ENCODE measurements at regions of chrX and their contacts with region 1.

Region 1: GRCh38 chrX:78945186-78945912 is at the start of gene P2RY10:
- DNase-seq: peak; percentile 85
- ATAC-seq: peak; percentile 79
- H3K4me3 ChIP-seq: peak within 1 kb of the TSS; percentile 86
- H3K27ac ChIP-seq: peak within 1 kb of the TSS; percentile 84
- H3K4me1 ChIP-seq: peaks cover 10% of the 10 kb centered on the region
- H3K27me3 ChIP-seq: no peaks in the 10 kb centered on the region
- CTCF ChIP-seq: no peak
- EP300 ChIP-seq: peak; percentile 88 to 90
- POLR2A ChIP-seq: peak; percentile 67
- RAD21 ChIP-seq: no peak
- polyA plus RNA-seq, gene P2RY10: 43.8 to 71.9 TPM

Region 2: GRCh38 chrX:78555401-78555980 is 389.9 kb before region 1 on chrX:
- CTCF ChIA-PET with region 1: interaction called, 5 read pairs
- POLR2A ChIA-PET with region 1: no interaction called
- RAD21 ChIA-PET with region 1: interaction called, 9 read pairs
- SMC1A ChIA-PET with region 1: interaction called, 3 read pairs
- in situ Hi-C with region 1: loop called (anchors 5 kb)
- intact Hi-C with region 1: loop called (anchors 5 kb)
- DNase-seq: no peak
- ATAC-seq: peak; percentile 48; the same call in 2 of the 3 replicates
- H3K4me3 ChIP-seq: no peak overlapping the region
- H3K27ac ChIP-seq: no peak overlapping the region
- H3K4me1 ChIP-seq: no peaks in the 10 kb centered on the region
- H3K27me3 ChIP-seq: no peaks in the 10 kb centered on the region
- CTCF ChIP-seq: peak; percentile 28 to 58 (median 49); a peak in 4 of 6 replicates
- EP300 ChIP-seq: no peak
- POLR2A ChIP-seq: no peak
- RAD21 ChIP-seq: peak; percentile 79

Region 3: DNA sequence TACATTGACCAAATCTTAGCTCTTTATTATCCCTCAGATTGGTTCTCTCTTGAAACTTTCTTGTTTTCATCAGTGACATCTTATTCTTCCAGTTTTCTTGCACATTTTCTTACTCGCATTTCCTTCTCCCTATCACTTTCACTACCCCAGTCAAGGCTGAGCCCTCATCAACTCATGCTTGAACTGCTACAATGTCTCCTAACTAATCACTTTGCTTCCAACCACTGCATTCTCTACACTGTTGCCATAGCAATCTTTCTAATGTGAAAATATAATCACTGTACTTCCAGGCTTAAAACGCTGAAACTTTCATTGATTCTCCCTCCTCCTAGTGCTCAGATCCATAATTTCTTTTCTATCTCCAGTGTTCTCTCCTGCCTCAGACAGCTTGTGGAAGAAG is 220.1 kb before region 1 on chrX:
- CTCF ChIA-PET with region 1: no interaction called
- POLR2A ChIA-PET with region 1: no interaction called
- RAD21 ChIA-PET with region 1: no interaction called
- SMC1A ChIA-PET with region 1: no interaction called
- in situ Hi-C with region 1: no loop called
- intact Hi-C with region 1: no loop called
- DNase-seq: no peak
- ATAC-seq: no peak
- H3K4me3 ChIP-seq: no peak overlapping the region
- H3K27ac ChIP-seq: no peak overlapping the region
- H3K4me1 ChIP-seq: no peaks in the 10 kb centered on the region
- H3K27me3 ChIP-seq: no peaks in the 10 kb centered on the region
- CTCF ChIP-seq: no peak
- EP300 ChIP-seq: no peak
- POLR2A ChIP-seq: no peak
- RAD21 ChIP-seq: no peak

Region 4: GRCh38 chrX:78886550-78886949 is 58.8 kb before region 1 on chrX:
- CTCF ChIA-PET with region 1: no interaction called
- POLR2A ChIA-PET with region 1: no interaction called
- RAD21 ChIA-PET with region 1: no interaction called
- SMC1A ChIA-PET with region 1: interaction called, 10 read pairs
- in situ Hi-C with region 1: no loop called
- intact Hi-C with region 1: no loop called
- DNase-seq: peak; percentile 5
- ATAC-seq: peak; percentile 85
- H3K4me3 ChIP-seq: no peak overlapping the region
- H3K27ac ChIP-seq: no peak overlapping the region
- H3K4me1 ChIP-seq: no peaks in the 10 kb centered on the region
- H3K27me3 ChIP-seq: no peaks in the 10 kb centered on the region
- CTCF ChIP-seq: peak; percentile 28 to 47 (median 38); a peak in 3 of 6 replicates
- EP300 ChIP-seq: no peak
- POLR2A ChIP-seq: no peak
- RAD21 ChIP-seq: no peak

Region 5: DNA sequence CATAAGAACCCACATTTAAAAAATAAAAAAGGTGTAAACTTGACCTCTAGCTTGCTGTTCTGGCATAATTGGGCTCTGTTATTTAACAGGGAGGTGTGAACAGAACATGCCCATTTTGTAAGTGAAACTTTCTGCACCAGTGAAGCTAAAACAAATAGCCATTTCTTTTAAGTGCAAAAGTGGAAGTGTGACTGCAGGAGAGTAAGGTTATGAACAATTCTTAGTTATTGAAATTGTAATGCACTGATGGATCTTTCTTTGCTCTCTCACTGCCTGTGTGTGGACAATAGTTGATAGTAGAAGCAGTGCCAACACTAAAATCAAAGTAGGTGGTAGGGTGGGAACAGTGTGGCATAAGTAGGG is 12.4 kb after region 1 on chrX:
- CTCF ChIA-PET with region 1: interaction called, 10 read pairs
- POLR2A ChIA-PET with region 1: interaction called, 14 read pairs
- RAD21 ChIA-PET with region 1: interaction called, 33 read pairs
- SMC1A ChIA-PET with region 1: interaction called, 81 read pairs
- in situ Hi-C with region 1: no loop called
- intact Hi-C with region 1: loop called (anchors 1 kb)
- DNase-seq: peak; percentile 93
- ATAC-seq: peak; percentile 84
- H3K4me3 ChIP-seq: peak overlapping the region; percentile 49; the same call in 1 of the 2 replicates
- H3K27ac ChIP-seq: peak overlapping the region; percentile 86
- H3K4me1 ChIP-seq: peaks cover 28% of the 10 kb centered on the region
- H3K27me3 ChIP-seq: no peaks in the 10 kb centered on the region
- CTCF ChIP-seq: no peak
- EP300 ChIP-seq: peak; percentile 72 to 97; a peak in 3 of 4 replicates
- POLR2A ChIP-seq: no peak
- RAD21 ChIP-seq: no peak

Region 6: DNA sequence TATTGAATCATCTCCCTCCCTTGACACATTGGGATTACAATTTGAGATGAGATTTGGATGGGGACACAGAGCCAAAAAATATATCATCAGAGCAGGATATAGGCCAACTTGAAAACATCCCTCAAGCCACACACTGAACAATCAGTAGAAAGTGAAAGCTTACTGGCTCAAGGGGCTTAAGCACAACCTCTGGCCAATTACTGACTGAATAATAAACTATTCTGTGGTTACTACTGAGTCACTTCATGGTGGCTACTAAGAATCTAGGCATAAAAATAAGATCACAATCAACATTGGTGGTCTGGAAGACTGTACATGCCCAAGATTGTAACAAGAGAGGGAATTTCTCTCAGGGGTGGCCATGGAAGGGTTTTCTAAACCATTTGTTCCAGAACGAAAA is 171.7 kb after region 1 on chrX:
- CTCF ChIA-PET with region 1: no interaction called
- POLR2A ChIA-PET with region 1: no interaction called
- RAD21 ChIA-PET with region 1: no interaction called
- SMC1A ChIA-PET with region 1: no interaction called
- in situ Hi-C with region 1: no loop called
- intact Hi-C with region 1: no loop called
- DNase-seq: no peak
- ATAC-seq: peak; percentile 98
- H3K4me3 ChIP-seq: no peak overlapping the region
- H3K27ac ChIP-seq: no peak overlapping the region
- H3K4me1 ChIP-seq: no peaks in the 10 kb centered on the region
- H3K27me3 ChIP-seq: no peaks in the 10 kb centered on the region
- CTCF ChIP-seq: no peak
- EP300 ChIP-seq: no peak
- POLR2A ChIP-seq: no peak
- RAD21 ChIP-seq: no peak

Region 7: DNA sequence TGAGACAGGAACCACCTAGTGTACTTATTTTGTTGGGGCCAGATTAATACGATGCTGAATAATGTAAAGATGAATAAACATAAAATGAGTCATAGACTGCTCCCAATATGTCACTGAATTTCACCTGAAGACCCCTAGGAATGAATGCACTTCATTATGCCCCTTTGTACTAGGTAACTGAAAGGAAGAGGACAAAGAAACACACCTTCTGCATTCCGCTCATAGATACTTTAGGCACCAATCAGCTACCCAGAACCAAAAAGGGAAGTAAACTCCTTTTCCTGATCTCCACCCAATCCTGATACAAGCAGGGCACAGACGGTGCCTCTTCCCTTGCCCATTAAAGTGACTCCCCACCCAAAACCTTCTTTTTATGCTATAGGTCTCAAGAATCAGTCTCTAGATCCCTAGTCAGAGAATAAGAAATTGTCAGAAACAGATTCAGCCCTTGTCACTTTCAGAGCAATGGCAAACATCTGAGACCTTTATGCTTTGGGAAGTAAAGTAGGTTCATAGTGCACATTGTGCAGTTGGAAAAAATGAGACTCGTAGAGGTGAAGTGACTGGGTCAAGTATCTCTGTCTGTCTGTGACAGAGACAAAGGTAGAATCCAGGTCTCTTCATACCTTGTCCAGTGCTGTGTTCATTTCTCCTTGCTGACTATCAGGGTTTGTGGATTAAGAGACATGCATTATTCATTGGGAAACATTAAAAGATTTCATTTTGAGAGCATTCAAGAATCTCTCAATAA is 201.5 kb after region 1 on chrX:
- CTCF ChIA-PET with region 1: interaction called, 4 read pairs
- POLR2A ChIA-PET with region 1: no interaction called
- RAD21 ChIA-PET with region 1: interaction called, 11 read pairs
- SMC1A ChIA-PET with region 1: interaction called, 8 read pairs
- in situ Hi-C with region 1: loop called (anchors 5 kb)
- intact Hi-C with region 1: loop called (anchors 5 kb)
- DNase-seq: peak; percentile 45
- ATAC-seq: peak; percentile 52
- H3K4me3 ChIP-seq: peak overlapping the region; percentile 39
- H3K27ac ChIP-seq: peak overlapping the region; percentile 73
- H3K4me1 ChIP-seq: peaks cover 8% of the 10 kb centered on the region
- H3K27me3 ChIP-seq: no peaks in the 10 kb centered on the region
- CTCF ChIP-seq: no peak
- EP300 ChIP-seq: no peak
- POLR2A ChIP-seq: no peak
- RAD21 ChIP-seq: no peak